BJ (cell line): ENCODE measurements at regions of chr1 and their contacts with region 1.

Region 1: GRCh38 chr1:12275369-12275768 is 45.5 kb downstream of the VPS13D start:
- DNase-seq: no peak
- H3K4me3 ChIP-seq: no peak overlapping the region
- H3K27me3 ChIP-seq: no peaks in the 10 kb centered on the region
- CTCF ChIP-seq: peak; percentile 82

Region 2: GRCh38 chr1:12135612-12136011 is 139.8 kb before region 1 on chr1:
- CTCF ChIA-PET with region 1: no interaction called
- POLR2A ChIA-PET with region 1: no interaction called
- DNase-seq: no peak
- H3K4me3 ChIP-seq: no peak overlapping the region
- H3K27me3 ChIP-seq: no peaks in the 10 kb centered on the region
- CTCF ChIP-seq: no peak

Region 3: DNA sequence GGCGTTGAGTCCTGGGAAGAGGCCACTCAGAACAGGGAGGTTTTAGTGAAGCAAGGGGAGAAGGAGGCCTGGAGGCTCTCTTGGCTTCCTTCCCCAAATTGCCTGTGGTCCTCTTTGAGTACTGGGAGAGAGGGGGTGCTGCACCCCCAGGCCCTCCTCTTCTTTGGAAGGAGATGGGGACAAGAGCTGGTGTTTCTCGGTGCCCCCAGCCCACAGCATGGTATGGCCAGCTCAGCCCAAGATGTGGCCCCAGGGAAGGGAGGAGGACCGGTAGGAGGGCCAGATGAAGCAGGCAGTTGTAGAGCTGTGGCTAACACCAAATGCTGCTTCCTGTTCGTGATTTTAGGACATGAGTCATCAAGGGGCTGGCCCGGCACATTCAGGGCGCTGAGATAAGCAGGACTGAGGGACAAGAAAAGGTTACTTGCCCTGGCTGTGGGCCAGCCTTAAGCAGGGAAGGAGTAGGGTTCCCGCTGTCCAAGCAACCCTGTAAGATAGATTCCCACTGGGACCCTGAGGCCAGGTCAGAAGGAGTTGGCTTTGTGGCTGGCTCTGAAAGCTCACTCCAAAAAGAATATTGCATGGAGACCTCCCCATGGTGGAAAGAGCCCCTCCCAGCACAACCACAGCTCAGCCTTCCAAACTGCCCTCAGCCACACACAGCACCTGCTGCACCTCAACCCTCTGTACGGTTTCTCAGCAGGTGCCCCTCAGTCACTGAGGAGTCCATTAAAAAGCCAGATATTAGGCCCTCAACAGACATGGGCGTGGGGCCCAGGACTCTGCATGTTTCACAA is 113.5 kb before region 1 on chr1:
- CTCF ChIA-PET with region 1: no interaction called
- POLR2A ChIA-PET with region 1: no interaction called
- DNase-seq: peak; percentile 76
- H3K4me3 ChIP-seq: no peak overlapping the region
- H3K27me3 ChIP-seq: no peaks in the 10 kb centered on the region
- CTCF ChIP-seq: no peak

Region 4: DNA sequence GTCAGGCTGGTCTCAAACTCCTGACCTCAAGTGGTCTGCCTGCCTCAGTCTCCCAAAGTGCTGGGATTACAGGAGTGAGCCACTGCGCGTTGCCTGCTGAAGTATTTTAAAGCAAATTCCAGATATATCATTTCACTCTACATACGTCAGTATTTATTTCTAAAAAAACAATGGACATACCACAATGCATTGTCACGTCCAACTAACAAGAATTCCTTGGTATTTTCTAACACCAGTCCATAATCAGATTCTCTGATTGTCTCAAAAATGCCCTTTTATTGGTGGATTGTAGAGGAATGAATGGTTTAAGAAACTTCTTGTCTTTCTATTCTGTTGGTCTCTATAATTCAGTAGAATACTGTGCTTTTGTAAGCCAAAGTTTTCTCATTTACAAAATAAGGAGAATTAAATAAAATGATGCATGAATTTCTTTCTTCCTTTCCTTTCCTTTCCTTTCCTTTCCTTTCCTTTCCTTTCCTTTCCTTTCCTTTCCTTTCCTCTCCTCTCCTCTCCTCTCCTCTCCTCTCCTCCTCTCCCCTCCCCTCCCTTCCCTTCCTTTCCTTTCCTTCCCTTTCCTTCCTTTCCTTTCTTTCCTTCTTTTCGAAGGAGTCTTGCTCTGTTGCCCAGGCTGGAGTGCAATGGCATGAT is 10.3 kb after region 1 on chr1:
- CTCF ChIA-PET with region 1: interaction called, 13 read pairs
- POLR2A ChIA-PET with region 1: no interaction called
- DNase-seq: no peak
- H3K4me3 ChIP-seq: no peak overlapping the region
- H3K27me3 ChIP-seq: no peaks in the 10 kb centered on the region
- CTCF ChIP-seq: no peak

Region 5: GRCh38 chr1:12294076-12294475 is 18.7 kb after region 1 on chr1:
- CTCF ChIA-PET with region 1: interaction called, 24 read pairs
- POLR2A ChIA-PET with region 1: no interaction called
- DNase-seq: no peak
- H3K4me3 ChIP-seq: no peak overlapping the region
- H3K27me3 ChIP-seq: no peaks in the 10 kb centered on the region
- CTCF ChIP-seq: no peak